Heart left ventricle (tissue), 16 donors: ENCODE measurements at regions of chr7 and their contacts with region 1.

Region 1: DNA sequence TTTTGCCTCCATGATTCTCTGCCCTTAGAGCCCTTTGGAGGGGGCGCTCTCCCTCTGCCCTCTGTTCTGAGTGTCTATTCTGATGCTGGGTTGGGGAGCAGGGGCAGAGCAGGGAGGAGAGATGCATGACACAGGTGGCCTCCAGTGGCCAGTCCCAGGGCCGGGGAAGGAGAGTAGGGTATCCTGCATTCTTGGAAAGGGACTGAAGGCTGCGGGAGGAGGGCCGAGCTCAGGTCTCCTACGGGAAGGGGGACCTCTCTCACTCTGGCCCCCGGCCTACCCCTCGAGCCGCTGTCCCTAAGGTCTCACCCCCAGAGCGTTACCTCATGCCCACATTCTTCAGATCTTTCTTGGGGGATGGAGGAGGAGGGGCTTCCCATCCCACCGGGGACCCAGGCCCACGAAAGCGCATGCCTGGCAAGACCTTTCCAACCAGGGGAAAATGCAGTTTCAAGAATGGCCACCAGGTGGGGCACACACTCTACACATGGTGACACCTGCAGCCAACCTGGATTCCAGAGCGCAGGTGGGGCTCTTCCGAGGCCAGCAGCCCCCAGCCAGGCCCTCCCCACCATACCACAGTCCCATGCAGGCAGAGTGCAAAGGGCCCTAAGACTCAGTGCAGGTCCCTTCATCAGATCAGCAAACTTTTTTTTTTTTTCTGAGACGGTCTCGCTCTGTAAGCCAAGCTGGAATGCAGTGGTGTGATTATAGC is 86.4 kb downstream of the MYL10 start:
- DNase-seq: peak; percentile 45 to 68 (median 57)
- ATAC-seq: peak in 3 of 4 donors; percentile 34 to 52 (median 35)
- H3K4me3 ChIP-seq: no peak overlapping the region
- H3K27ac ChIP-seq: no peak overlapping the region
- H3K4me1 ChIP-seq: peaks cover 0 to 9% (median 0%) of the 10 kb centered on the region in 12 donors
- H3K27me3 ChIP-seq: peaks cover 0 to 5% (median 0%) of the 10 kb centered on the region in 9 donors
- CTCF ChIP-seq: peak; percentile 74 to 93 (median 89)
- POLR2A ChIP-seq: no peak

Region 2: GRCh38 chr7:101321491-101322401 is 220.9 kb before region 1 on chr7 and contains the start of gene IFT22:
- intact Hi-C with region 1: loop called in 1 of 10 experiments (anchors 2 kb)
- DNase-seq: peak; percentile 94 to 96 (median 95)
- ATAC-seq: peak; percentile 92 to 100 (median 98)
- H3K4me3 ChIP-seq: peak within 1 kb of the TSS; percentile 60 to 98 (median 78)
- H3K27ac ChIP-seq: peak within 1 kb of the TSS; percentile 14 to 85 (median 76)
- H3K4me1 ChIP-seq: peaks cover 0 to 16% (median 8%) of the 10 kb centered on the region in 12 donors
- H3K27me3 ChIP-seq: no peaks in the 10 kb centered on the region
- CTCF ChIP-seq: peak in 8 of 12 donors; percentile 18 to 52 (median 40)
- POLR2A ChIP-seq: peak in 1 of 2 donors; percentile 50
- total RNA-seq, gene IFT22: 15.7 to 39.3 (median 30.0) TPM

Region 3: GRCh38 chr7:101352920-101353308 is 189.8 kb before region 1 on chr7:
- intact Hi-C with region 1: no loop called
- DNase-seq: no peak
- ATAC-seq: no peak
- H3K4me3 ChIP-seq: no peak overlapping the region
- H3K27ac ChIP-seq: no peak overlapping the region
- H3K4me1 ChIP-seq: no peaks in the 10 kb centered on the region
- H3K27me3 ChIP-seq: peaks cover 0 to 11% (median 0%) of the 10 kb centered on the region in 9 donors
- CTCF ChIP-seq: no peak
- POLR2A ChIP-seq: no peak

Region 4: GRCh38 chr7:101453617-101454016 is 89.1 kb before region 1 on chr7:
- intact Hi-C with region 1: no loop called
- DNase-seq: no peak
- ATAC-seq: no peak
- H3K4me3 ChIP-seq: no peak overlapping the region
- H3K27ac ChIP-seq: no peak overlapping the region
- H3K4me1 ChIP-seq: no peaks in the 10 kb centered on the region
- H3K27me3 ChIP-seq: peaks cover 0 to 17% (median 0%) of the 10 kb centered on the region in 9 donors
- CTCF ChIP-seq: no peak
- POLR2A ChIP-seq: no peak

Region 5: DNA sequence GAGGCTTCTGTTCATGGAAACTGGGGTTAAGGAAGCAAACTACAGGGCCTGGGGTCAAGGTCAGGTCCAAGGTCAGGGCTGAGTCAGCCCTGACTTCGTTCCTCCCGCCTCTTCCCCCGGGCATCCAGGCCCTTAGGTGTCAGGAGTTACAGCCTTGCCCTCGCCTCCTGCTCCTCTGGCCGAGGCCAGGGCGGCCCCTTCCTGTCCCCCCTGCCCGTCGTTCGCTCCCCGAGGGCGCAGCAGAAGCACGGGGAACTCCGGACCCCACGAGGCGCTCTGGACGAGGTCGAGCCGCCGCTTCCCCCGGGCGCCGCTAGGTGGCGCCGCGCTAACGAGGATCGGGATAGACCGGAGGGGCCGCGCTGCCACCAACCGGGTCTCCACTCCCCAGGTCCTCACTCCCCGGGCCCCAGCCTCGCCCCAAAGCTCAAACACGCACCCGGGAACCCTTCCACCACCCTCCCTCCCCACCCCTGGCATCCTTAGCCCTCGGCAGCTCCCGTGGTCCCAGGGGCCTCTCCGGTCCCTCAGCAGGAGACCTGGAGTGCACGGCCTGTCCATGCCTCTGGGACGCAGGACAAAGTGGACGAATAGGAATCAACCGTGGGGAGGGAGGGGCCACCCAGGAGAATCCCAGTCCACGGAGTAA is 145.6 kb after region 1 on chr7:
- intact Hi-C with region 1: loop called in 1 of 10 experiments (anchors 10 kb)
- DNase-seq: peak; percentile 73 to 92 (median 80)
- ATAC-seq: peak; percentile 58 to 91 (median 87)
- H3K4me3 ChIP-seq: peak overlapping the region in 9 of 12 donors; percentile 11 to 34 (median 31)
- H3K27ac ChIP-seq: peak overlapping the region in 1 of 12 donors; percentile 31
- H3K4me1 ChIP-seq: peaks cover 0 to 19% (median 10%) of the 10 kb centered on the region in 12 donors
- H3K27me3 ChIP-seq: no peaks in the 10 kb centered on the region
- CTCF ChIP-seq: peak; percentile 92 to 99 (median 96)
- POLR2A ChIP-seq: no peak

Region 6: DNA sequence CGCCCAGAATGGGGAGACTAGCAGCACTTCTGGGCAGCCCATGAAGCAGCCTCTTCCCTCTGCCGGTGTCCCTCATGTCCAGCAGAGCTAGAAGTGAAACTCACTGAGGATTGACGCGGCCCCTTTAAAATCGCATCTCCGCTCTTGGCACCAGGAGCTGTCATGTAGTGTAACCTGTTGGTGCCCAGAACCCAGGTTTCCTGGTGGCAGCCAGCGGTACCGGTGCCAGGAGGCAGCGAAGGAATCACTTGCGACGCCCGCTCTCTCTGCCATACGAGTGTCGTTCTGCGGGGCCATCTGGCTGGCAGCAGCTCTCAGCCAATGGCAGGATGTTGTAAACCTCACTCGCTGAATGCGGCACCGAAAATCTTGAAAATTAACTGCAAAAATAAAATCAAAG is 357.4 kb after region 1 on chr7:
- intact Hi-C with region 1: no loop called
- DNase-seq: peak; percentile 69 to 89 (median 77)
- ATAC-seq: peak; percentile 69 to 86 (median 83)
- H3K4me3 ChIP-seq: peak overlapping the region in 8 of 12 donors; percentile 2 to 38 (median 30)
- H3K27ac ChIP-seq: peak overlapping the region in 10 of 12 donors; percentile 7 to 79 (median 60)
- H3K4me1 ChIP-seq: peaks cover 0 to 75% (median 40%) of the 10 kb centered on the region in 12 donors
- H3K27me3 ChIP-seq: no peaks in the 10 kb centered on the region
- CTCF ChIP-seq: peak in 3 of 12 donors; percentile 11 to 16 (median 14)
- POLR2A ChIP-seq: no peak

Region 7: DNA sequence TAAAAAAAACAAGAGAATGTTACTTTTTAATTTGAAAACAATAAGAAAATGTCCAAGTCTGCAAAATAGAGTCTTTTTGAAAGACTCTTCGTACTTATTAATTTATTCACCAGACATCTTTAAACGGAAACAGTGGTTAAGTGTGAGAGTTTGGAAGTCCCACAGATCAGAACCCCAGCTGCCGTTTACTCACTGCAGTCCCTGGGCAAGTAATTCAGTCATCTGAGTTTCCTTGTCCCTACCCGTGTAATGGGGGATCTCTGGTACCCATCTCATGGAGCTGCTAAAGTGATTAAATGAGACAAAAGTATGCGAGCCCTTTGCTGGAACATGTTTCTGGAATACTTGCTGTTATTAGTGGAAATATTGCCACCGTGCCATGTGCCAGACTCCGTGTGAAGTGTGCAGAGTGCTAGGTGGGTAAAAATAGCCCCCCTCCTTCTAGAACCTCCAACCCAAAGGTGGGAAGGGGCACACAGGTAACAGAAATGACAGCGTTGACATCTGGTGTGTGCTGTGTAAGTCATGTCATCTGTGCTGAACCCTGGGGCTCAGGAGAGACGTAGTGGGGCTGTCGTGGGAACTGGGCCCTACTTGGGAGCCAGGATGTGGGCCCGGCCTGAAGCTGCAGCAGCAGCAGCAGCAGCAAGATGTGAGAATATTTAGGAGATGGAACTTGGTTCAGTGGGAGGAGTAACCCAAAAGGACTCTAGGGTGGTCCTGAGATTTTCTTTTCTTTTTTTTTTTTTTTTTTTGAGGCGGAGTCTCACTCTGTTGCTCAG is 415.3 kb after region 1 on chr7:
- intact Hi-C with region 1: no loop called
- DNase-seq: no peak
- ATAC-seq: peak in 1 of 4 donors; percentile 3
- H3K4me3 ChIP-seq: no peak overlapping the region
- H3K27ac ChIP-seq: peak overlapping the region in 9 of 12 donors; percentile 25 to 96 (median 85)
- H3K4me1 ChIP-seq: peaks cover 0 to 66% (median 34%) of the 10 kb centered on the region in 12 donors
- H3K27me3 ChIP-seq: no peaks in the 10 kb centered on the region
- CTCF ChIP-seq: no peak
- POLR2A ChIP-seq: no peak

Region 8: GRCh38 chr7:102236592-102237287 is 694.1 kb after region 1 on chr7:
- intact Hi-C with region 1: loop called in 1 of 10 experiments (anchors 10 kb)
- DNase-seq: peak in 4 of 5 donors; percentile 45 to 64 (median 58)
- ATAC-seq: peak; percentile 73 to 90 (median 79)
- H3K4me3 ChIP-seq: no peak overlapping the region
- H3K27ac ChIP-seq: no peak overlapping the region
- H3K4me1 ChIP-seq: peaks cover 0 to 11% (median 3%) of the 10 kb centered on the region in 12 donors
- H3K27me3 ChIP-seq: no peaks in the 10 kb centered on the region
- CTCF ChIP-seq: peak; percentile 52 to 90 (median 82)
- POLR2A ChIP-seq: no peak

Region 9: GRCh38 chr7:102390697-102391484 is 848.2 kb after region 1 on chr7:
- intact Hi-C with region 1: loop called in 2 of 10 experiments (anchors 5 kb)
- DNase-seq: peak; percentile 76 to 90 (median 82)
- ATAC-seq: peak; percentile 51 to 85 (median 82)
- H3K4me3 ChIP-seq: no peak overlapping the region
- H3K27ac ChIP-seq: no peak overlapping the region
- H3K4me1 ChIP-seq: peaks cover 0 to 11% (median 4%) of the 10 kb centered on the region in 12 donors
- H3K27me3 ChIP-seq: no peaks in the 10 kb centered on the region
- CTCF ChIP-seq: peak; percentile 85 to 95 (median 91)
- POLR2A ChIP-seq: no peak